ENCODE measurements at regions of chr3 and their contacts with region 1.

Region 1: GRCh38 chr3:95297586-95297985 is 1234.7 kb downstream of the NSUN3 start:
- DNase-seq: no peak
- ATAC-seq: no peak
- H3K4me3 ChIP-seq: no peak overlapping the region
- H3K27ac ChIP-seq: no peak overlapping the region
- H3K4me1 ChIP-seq: no peaks in the 10 kb centered on the region
- H3K27me3 ChIP-seq: no peaks in the 10 kb centered on the region
- CTCF ChIP-seq: no peak

Region 2: DNA sequence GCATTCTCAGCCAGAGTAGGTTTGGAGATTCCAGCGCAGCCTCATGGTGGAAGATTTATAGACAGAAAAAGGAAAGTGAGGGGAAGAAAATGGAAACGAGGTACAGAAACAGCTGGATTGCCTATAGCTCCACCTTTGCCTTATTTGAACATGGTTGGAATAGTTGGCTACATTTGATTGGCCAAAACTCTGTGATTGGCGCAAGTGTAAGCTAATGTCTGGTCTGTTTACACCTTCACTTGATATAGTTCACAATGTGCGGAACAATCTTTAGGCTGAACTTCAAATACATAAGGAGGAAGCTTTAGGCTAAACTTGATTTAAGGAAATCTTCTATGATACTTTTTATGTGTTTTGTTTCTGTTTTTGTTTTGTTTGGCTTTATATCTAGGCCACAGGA is 42.8 kb before region 1 on chr3:
- intact Hi-C with region 1: loop called in 1 of 10 experiments (anchors 1 kb)
- DNase-seq: no peak
- ATAC-seq: no peak
- H3K4me3 ChIP-seq: no peak overlapping the region
- H3K27ac ChIP-seq: no peak overlapping the region
- H3K4me1 ChIP-seq: no peaks in the 10 kb centered on the region
- H3K27me3 ChIP-seq: no peaks in the 10 kb centered on the region
- CTCF ChIP-seq: no peak

Region 3: GRCh38 chr3:95356764-95357501 is 59.3 kb after region 1 on chr3:
- intact Hi-C with region 1: no loop called
- DNase-seq: no peak
- ATAC-seq: no peak
- H3K4me3 ChIP-seq: no peak overlapping the region
- H3K27ac ChIP-seq: no peak overlapping the region
- H3K4me1 ChIP-seq: no peaks in the 10 kb centered on the region
- H3K27me3 ChIP-seq: no peaks in the 10 kb centered on the region
- CTCF ChIP-seq: no peak